MCF 10A (cell line): ENCODE measurements at regions of chr3 and their contacts with region 1.

Region 1: GRCh38 chr3:138915503-138916498 is 31.1 kb downstream of the FOXL2 start:
- DNase-seq: peak; percentile 91
- H3K4me3 Mint-ChIP-seq: peak overlapping the region; percentile 85
- H3K27ac Mint-ChIP-seq: peak overlapping the region; percentile 76
- H3K4me1 Mint-ChIP-seq: peaks cover 6% of the 10 kb centered on the region
- H3K27me3 Mint-ChIP-seq: no peaks in the 10 kb centered on the region
- CTCF ChIP-seq: peak; percentile 94

Region 2: GRCh38 chr3:138493804-138494606 is 421.8 kb before region 1 on chr3:
- CTCF ChIA-PET with region 1: interaction called, 4 read pairs
- POLR2A ChIA-PET with region 1: no interaction called
- intact Hi-C with region 1: loop called (anchors 5 kb)
- DNase-seq: peak; percentile 86
- H3K4me3 Mint-ChIP-seq: no peak overlapping the region
- H3K27ac Mint-ChIP-seq: peak overlapping the region; percentile 14
- H3K4me1 Mint-ChIP-seq: peaks cover 16% of the 10 kb centered on the region
- H3K27me3 Mint-ChIP-seq: no peaks in the 10 kb centered on the region
- CTCF ChIP-seq: no peak

Region 3: DNA sequence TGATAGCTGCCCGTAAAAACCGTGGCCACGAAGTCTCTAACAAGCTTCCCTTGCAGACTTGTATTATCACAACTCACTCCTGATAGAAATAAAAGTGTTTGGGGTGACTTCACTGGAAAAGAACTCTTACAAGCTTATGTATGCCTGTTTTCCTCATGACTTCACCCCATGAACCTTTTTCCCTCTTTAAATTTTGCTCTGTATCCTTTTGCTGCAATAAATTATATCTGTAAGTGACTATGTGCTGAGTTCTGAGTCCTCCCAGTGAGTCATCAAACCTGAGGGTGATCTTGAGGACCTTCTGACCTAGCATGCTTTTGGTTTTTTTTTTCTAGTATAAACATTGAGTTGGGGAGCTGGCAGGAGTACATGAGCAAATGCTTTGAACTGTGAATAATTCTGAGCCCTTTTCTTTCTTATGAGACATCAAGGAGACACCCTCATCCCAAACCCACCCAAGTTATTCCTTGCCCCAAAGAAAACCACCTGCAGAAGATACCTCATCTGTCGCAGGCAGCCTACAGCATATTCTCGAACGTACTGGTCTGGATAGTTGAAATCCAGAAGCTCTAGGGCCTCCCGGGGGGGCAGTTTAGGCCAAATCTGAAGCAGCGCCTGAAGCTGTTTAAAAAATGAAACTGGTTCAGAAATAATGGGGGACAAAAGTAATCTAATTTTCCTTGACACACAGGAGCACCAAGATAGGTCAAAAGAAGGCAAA is 221.4 kb before region 1 on chr3:
- CTCF ChIA-PET with region 1: interaction called, 81 read pairs
- POLR2A ChIA-PET with region 1: interaction called, 13 read pairs
- intact Hi-C with region 1: loop called (anchors 1 kb)
- DNase-seq: peak; percentile 80
- H3K4me3 Mint-ChIP-seq: peak overlapping the region; percentile 2
- H3K27ac Mint-ChIP-seq: peak overlapping the region; percentile 43
- H3K4me1 Mint-ChIP-seq: peaks cover 8% of the 10 kb centered on the region
- H3K27me3 Mint-ChIP-seq: no peaks in the 10 kb centered on the region
- CTCF ChIP-seq: no peak

Region 4: DNA sequence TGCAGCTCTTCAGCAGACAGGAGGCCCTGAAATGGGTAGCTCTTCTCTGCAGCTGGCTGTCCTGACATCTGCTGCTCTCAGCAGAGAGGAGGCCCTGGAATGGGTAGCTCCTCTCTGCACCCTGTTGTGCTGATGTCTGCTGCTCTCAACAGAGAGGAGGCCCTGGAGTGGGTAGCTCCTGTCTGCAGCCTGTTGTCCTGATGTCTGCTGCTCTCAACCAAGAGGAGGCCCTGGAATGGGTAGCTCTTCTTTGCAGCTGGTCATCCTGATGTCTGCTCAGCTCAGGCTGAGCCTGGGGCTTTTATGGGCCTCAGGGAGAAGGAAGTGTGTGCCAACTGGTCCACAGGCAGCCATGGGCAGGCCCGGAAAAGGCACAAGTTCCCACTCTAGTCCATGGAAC is 147.7 kb before region 1 on chr3:
- CTCF ChIA-PET with region 1: interaction called, 13 read pairs
- POLR2A ChIA-PET with region 1: interaction called, 5 read pairs
- intact Hi-C with region 1: loop called (anchors 10 kb)
- DNase-seq: peak; percentile 21
- H3K4me3 Mint-ChIP-seq: no peak overlapping the region
- H3K27ac Mint-ChIP-seq: no peak overlapping the region
- H3K4me1 Mint-ChIP-seq: peaks cover 6% of the 10 kb centered on the region
- H3K27me3 Mint-ChIP-seq: no peaks in the 10 kb centered on the region
- CTCF ChIP-seq: no peak

Region 5: GRCh38 chr3:138834359-138835212 is 81.2 kb before region 1 on chr3 and contains the start of gene PIK3CB:
- CTCF ChIA-PET with region 1: interaction called, 15 read pairs
- POLR2A ChIA-PET with region 1: interaction called, 28 read pairs
- intact Hi-C with region 1: loop called (anchors 1 kb)
- DNase-seq: peak; percentile 85
- H3K4me3 Mint-ChIP-seq: peak within 1 kb of the TSS; percentile 82
- H3K27ac Mint-ChIP-seq: peak within 1 kb of the TSS; percentile 90
- H3K4me1 Mint-ChIP-seq: peaks cover 23% of the 10 kb centered on the region
- H3K27me3 Mint-ChIP-seq: no peaks in the 10 kb centered on the region
- CTCF ChIP-seq: no peak
- total RNA-seq, gene PIK3CB: 21.0 and 21.1 TPM in 2 replicates

Region 6: GRCh38 chr3:138898301-138898700 is 17.5 kb before region 1 on chr3:
- CTCF ChIA-PET with region 1: interaction called, 32 read pairs
- POLR2A ChIA-PET with region 1: no interaction called
- intact Hi-C with region 1: no loop called
- DNase-seq: no peak
- H3K4me3 Mint-ChIP-seq: no peak overlapping the region
- H3K27ac Mint-ChIP-seq: no peak overlapping the region
- H3K4me1 Mint-ChIP-seq: peaks cover 8% of the 10 kb centered on the region
- H3K27me3 Mint-ChIP-seq: no peaks in the 10 kb centered on the region
- CTCF ChIP-seq: no peak

Region 7: GRCh38 chr3:139439278-139439677 is 523.5 kb after region 1 on chr3:
- CTCF ChIA-PET with region 1: no interaction called
- POLR2A ChIA-PET with region 1: no interaction called
- intact Hi-C with region 1: no loop called
- DNase-seq: no peak
- H3K4me3 Mint-ChIP-seq: no peak overlapping the region
- H3K27ac Mint-ChIP-seq: no peak overlapping the region
- H3K4me1 Mint-ChIP-seq: peaks cover 14% of the 10 kb centered on the region
- H3K27me3 Mint-ChIP-seq: no peaks in the 10 kb centered on the region
- CTCF ChIP-seq: no peak